ENCODE measurements at regions of chr11 and their contacts with region 1.

Region 1: GRCh38 chr11:66386171-66387069 is 14.9 kb upstream of the SLC29A2 start:
- DNase-seq: peak; percentile 91
- H3K4me3 ChIP-seq: peak overlapping the region; percentile 42
- H3K27ac ChIP-seq: no peak overlapping the region
- H3K4me1 ChIP-seq: peaks cover 24% of the 10 kb centered on the region
- CTCF ChIP-seq: peak; percentile 97

Region 2: DNA sequence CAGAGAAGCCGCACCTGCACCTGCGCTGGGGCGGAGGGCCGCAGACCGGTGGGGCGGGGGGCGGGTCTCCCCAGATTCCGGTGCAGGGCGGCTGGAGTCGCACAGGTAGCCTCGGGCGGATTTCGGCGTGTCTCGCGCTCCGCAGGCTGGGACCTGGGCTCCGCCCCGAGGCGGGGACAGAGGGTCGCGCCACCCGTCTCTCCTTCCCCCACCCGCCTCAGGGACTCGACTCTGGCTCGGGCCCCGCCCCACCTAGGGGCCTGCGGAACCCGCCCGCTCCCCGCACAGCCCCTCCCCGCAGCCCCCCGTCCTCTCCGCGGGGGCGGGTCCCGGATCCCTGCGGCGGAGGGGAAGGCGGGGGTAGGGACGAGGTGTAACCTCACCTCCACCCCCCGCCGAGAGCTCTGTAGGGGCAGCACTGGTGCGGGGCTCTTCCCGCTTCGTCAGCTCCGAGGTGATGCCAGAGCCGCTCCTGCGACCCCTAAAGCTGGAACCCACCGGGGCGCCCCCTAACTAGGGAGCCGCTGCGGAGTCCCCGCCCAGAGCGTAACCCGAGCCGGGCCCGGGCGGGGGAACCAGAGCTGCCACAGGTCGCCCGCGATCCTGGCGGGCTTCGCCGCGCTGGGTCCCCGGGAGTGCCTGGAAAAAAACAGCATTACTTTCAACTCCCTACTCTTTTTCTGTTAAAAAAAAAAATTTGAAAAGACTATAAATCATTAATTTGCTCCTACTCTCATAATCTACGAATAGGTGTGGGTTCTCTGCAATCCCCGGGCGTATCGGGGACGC is 14.6 kb before region 1 on chr11 and contains the start of gene SLC29A2:
- CTCF ChIA-PET with region 1: interaction called, 7 read pairs
- POLR2A ChIA-PET with region 1: interaction called, 8 read pairs
- intact Hi-C with region 1: loop called (anchors 2 kb)
- DNase-seq: peak; percentile 95
- H3K4me3 ChIP-seq: peak within 1 kb of the TSS; percentile 82
- H3K27ac ChIP-seq: peak within 1 kb of the TSS; percentile 86
- H3K4me1 ChIP-seq: peaks cover 22% of the 10 kb centered on the region
- CTCF ChIP-seq: no peak; the same call in 1 of the 2 replicates
- total RNA-seq, gene SLC29A2: 24.7 and 33.6 TPM in 2 replicates

Region 3: GRCh38 chr11:66408488-66409214 is 22.2 kb after region 1 on chr11:
- CTCF ChIA-PET with region 1: interaction called, 6 read pairs
- POLR2A ChIA-PET with region 1: no interaction called
- intact Hi-C with region 1: loop called (anchors 1 kb)
- DNase-seq: peak; percentile 85
- H3K4me3 ChIP-seq: no peak overlapping the region
- H3K27ac ChIP-seq: no peak overlapping the region
- H3K4me1 ChIP-seq: peaks cover 4% of the 10 kb centered on the region
- CTCF ChIP-seq: peak; percentile 100

Region 4: DNA sequence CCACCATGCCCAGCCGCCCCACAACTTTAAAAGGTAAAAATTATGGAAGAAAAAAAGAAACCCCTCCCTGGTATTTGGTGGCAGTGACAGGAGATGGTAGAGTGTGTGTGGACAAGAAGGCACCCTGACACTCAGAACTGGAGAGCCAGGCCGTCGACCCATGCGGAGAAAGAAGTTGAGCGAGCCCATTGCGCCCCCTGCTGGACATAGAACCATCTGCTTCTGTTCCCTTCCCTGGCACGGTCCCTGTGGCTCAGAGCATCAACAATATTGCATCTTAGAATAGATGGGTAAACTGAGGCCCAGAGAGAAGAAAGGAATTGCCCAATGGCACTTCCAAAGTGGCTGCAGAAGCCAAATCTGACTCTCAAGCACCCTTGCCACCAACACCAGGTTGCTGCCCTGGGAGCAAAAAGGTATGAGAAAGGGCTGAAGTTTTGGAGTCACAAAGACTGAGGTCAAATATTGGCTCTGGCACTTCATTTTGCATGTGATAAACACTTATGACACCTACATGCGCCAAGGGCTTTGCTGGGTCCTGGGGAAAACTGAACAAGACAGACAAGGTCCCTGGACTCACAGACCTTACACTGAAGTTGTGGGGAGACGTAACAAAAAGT is 43.7 kb after region 1 on chr11:
- CTCF ChIA-PET with region 1: no interaction called
- POLR2A ChIA-PET with region 1: no interaction called
- intact Hi-C with region 1: loop called (anchors 2 kb)
- DNase-seq: peak; percentile 73
- H3K4me3 ChIP-seq: no peak overlapping the region
- H3K27ac ChIP-seq: no peak overlapping the region
- H3K4me1 ChIP-seq: no peaks in the 10 kb centered on the region
- CTCF ChIP-seq: peak; percentile 93

Region 5: GRCh38 chr11:66530927-66531709 is 144.7 kb after region 1 on chr11:
- CTCF ChIA-PET with region 1: no interaction called
- POLR2A ChIA-PET with region 1: no interaction called
- intact Hi-C with region 1: no loop called
- DNase-seq: no peak
- H3K4me3 ChIP-seq: no peak overlapping the region
- H3K27ac ChIP-seq: no peak overlapping the region
- H3K4me1 ChIP-seq: no peaks in the 10 kb centered on the region
- CTCF ChIP-seq: no peak